AG04449 (cell line): ENCODE measurements at regions of chr11 and their contacts with region 1.

Region 1: DNA sequence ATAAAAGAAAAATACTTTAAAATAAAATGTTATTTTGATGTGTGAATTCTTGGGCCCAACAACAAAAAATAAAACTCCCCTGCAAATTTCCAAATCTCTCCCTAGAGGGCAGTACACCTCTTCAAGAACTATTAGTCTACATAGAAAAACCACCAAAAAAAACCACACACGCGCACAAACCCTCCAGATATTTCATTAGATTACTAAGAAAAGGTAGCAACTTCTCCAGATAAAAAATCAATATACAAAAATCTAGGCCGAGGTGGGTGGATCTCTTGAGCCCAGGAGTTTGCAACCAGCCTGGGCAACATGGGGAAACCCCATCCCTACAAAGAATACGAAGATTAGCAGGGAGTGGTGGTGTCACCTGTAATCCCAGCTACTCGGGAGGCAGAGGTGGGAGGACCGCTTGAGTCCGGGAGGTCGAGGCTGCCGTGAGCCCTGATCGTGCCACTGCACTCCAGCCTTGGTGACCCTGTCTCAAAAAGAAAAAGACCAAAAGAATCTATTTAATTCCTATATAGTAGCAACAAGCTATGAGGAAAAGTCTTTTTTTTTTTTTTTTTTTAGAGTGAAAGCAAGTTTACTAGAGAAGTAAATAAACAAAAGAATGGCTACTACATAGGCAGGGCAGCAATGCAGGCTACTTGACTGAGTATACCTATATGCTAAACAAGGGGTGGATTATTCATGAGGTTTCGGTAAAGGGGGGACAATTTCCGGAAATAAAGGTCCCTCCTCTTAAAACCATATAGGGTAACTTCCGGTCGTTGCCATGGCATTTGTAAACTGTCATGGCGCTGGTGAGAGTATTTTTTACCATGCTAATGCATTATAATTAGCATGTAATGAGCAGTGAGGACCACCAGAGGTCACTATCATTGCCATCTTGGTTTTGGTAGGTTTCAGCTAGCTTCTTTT is 13.1 kb downstream of the B3GNT6 start:
- DNase-seq: peak; percentile 65
- H3K4me3 ChIP-seq: peak overlapping the region; percentile 52
- CTCF ChIP-seq: peak; percentile 48

Region 2: DNA sequence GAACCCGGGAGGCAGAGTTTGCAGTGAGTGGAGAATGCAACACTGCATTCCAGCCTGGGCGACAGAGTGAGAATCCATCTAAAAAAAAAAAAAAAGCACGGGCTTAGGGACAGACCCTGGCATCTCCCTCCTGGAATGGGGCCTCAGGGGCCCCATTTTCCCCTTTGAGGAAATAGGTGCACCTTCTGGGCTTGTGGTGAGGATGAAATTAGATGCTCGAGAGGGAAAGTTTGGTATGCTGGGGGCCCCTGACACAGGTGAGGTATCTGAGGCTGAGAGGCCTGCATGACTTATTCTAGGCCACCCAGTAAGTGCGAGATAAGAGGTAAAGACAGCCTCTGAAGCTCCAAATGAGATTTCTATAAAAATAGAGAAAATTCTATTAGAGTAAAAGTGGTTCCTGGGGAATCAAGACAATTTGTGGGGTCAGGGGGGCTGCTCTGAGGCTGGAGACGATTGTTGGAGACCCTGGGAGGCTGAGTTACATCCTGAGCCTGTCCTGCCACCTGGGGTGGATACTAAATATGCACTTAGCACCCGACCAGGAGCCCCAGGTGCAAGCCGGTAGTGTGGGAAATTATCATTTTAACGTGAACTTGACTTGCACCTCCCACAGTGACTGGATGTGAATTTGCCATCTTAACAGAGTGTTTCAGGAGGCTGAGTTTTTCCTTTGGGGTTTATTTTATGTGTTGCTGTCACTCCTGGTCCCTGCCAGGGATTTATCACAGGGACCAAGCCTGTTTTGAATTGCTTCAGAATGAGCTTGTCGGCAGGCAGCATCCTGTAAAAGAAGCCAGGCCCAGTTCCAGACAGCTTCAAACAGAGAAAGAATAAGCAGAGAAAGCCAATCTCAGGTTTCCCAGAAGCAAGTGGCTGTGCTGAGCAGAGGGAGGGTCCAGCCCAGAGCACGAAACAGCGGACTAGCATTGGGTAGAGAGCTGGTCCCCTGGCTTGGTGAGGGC is 312.5 kb before region 1 on chr11:
- CTCF ChIA-PET with region 1: interaction called, 16 read pairs
- POLR2A ChIA-PET with region 1: no interaction called
- DNase-seq: no peak
- H3K4me3 ChIP-seq: no peak overlapping the region
- CTCF ChIP-seq: no peak

Region 3: DNA sequence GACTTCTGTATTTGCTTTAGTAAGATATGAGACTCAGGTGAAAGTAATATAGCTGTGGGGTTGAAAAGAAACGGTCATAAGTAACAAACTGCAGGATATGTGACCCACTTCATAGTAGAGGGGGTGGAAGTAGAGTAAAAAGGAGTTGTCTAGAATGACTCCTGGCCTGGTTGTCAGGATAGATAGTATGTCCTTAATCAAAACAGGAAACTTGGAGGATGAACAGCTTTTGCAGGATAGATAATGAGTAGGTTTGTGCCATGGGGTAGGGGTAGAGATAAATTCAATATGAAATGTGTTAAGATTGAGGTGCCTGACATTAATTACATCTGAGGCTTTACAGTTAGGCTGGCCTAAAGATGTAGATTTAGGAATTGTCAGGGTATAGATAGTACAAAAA is 60.1 kb before region 1 on chr11:
- CTCF ChIA-PET with region 1: no interaction called
- POLR2A ChIA-PET with region 1: no interaction called
- DNase-seq: no peak
- H3K4me3 ChIP-seq: no peak overlapping the region
- CTCF ChIP-seq: no peak

Region 4: DNA sequence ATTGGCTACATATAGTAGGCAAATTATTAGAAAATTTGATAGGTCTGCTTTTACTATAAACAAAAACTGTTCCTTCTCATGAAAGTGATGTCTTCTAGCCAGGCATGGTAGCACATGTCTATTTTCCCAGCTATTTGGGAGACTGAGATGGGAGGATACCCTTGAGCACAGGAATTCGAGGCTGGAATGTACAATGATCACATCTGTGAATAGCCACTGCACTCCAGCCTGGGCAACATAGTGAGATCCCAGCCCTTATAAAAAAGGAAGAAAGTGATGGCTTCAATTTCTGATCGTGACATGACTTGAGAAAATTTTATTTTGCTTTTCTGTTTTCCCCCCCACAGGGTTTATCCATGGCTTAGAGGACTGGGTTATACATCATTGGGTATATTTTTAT is 32.6 kb before region 1 on chr11:
- CTCF ChIA-PET with region 1: no interaction called
- POLR2A ChIA-PET with region 1: no interaction called
- DNase-seq: no peak
- H3K4me3 ChIP-seq: no peak overlapping the region
- CTCF ChIP-seq: no peak

Region 5: GRCh38 chr11:77073328-77074001 is 26.2 kb after region 1 on chr11:
- CTCF ChIA-PET with region 1: interaction called, 13 read pairs
- POLR2A ChIA-PET with region 1: interaction called, 5 read pairs
- DNase-seq: peak; percentile 49
- H3K4me3 ChIP-seq: no peak overlapping the region
- CTCF ChIP-seq: peak; percentile 61

Region 6: GRCh38 chr11:77091146-77091940 is 44.1 kb after region 1 on chr11:
- CTCF ChIA-PET with region 1: interaction called, 320 read pairs
- POLR2A ChIA-PET with region 1: no interaction called
- DNase-seq: no peak
- H3K4me3 ChIP-seq: no peak overlapping the region
- CTCF ChIP-seq: peak; percentile 97

Region 7: DNA sequence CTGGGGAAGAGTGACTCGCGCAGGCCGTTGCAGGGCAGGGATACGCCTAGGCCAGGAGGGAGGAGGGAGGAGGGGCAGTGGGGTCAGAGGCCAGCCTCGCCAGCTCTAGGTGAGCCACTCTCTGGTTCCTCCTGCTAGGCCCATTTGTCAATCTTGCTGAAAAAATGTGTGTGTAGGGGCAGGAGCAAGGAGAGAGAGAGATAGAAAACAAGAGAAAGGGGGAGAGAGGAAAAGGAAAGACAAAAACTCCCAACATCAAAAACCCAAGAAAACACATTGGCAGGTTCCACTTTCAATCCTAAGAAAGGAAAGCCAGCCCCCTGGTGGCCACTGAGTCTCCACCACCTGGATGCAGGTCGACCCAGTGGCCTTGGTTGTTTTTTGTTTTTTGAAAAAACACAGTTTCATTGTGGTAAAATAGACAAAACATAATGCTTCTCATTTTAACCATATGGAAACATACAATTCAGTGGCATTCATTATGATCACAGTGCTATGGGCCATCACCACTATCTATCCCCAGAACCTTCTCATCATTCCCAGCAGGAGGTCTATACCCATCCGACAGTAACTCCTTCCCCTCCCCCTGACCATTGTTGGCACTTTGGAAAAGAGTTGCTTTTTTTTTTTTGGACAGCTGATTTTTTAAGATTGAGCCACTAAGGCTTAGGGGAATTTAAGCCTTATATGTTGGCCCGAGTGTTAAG is 66.3 kb after region 1 on chr11:
- CTCF ChIA-PET with region 1: interaction called, 23 read pairs
- POLR2A ChIA-PET with region 1: no interaction called
- DNase-seq: no peak
- H3K4me3 ChIP-seq: no peak overlapping the region
- CTCF ChIP-seq: peak; percentile 58

Region 8: DNA sequence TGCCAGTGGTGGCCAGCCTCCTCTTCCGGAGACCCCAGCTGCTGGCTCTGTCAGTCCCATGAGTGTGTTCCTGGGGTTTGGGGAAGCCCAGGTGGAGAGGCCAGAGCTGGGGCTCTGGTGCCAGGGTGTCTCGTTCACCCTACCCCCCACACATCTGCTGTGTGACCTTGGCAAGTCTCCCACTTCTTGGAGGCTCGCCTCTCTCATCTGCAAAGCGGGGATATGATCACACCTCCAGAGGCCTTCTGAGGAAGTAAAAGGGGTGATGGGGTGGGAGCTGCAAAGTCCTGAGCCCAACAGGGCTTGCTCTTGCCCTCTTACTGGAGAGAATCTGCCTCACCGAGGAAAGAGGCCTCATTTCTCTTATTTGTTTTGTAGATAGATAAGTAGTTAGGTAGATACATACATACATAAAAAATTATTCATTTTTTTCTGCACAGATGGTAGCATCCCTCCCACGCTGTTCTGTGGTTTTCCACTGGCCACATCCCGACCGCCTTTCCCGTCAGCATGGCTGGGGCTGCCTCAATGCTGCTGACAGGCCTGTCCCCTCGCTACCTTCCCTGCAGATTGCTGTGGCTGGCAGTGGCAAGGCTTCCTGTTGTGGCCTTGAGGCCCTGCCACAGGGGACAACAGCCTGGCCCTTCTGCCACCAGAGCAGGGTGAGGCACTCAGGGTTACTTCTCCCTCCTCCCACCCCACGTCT is 104.7 kb after region 1 on chr11:
- CTCF ChIA-PET with region 1: no interaction called
- POLR2A ChIA-PET with region 1: no interaction called
- DNase-seq: no peak
- H3K4me3 ChIP-seq: no peak overlapping the region
- CTCF ChIP-seq: no peak

Region 9: DNA sequence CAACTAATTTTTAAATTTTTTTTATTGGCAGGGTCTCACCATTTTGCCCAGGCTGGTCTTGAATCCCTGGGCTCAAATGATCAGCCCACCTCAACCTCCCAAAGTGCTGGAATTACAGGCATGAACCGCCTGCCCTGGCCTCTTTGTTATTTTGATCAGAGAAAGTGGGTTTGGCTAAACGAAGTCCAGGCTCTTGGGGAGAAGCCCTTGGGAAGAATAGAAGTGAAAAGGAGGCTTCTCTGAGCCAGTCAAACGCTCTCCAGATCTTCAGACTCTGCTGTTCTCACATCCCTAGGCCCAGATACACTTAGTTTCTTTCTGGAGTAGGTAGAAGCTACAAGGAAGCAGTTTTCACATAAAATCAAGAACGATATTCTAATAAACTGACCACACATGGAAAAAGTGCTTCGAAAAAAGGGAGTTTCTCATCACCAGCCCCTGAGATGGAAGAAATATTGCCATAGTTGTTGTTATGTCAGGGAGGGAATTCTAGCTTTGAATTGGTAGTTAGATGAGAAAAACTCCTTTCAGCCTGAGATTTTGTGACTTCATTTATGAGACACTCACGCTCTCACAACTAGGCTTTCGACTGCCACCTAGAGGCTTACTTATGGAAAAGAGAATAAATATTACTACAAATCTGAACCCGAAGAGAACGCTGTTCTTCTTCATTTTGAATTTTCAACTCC is 500.7 kb after region 1 on chr11:
- CTCF ChIA-PET with region 1: interaction called, 17 read pairs
- POLR2A ChIA-PET with region 1: no interaction called
- DNase-seq: peak; percentile 21
- H3K4me3 ChIP-seq: no peak overlapping the region
- CTCF ChIP-seq: peak; percentile 38